ENCODE measurements at regions of chr10 and their contacts with region 1.

Region 1: GRCh38 chr10:51186361-51186760 is 112.1 kb downstream of the PRKG1 start:
- DNase-seq: no peak
- H3K4me3 ChIP-seq: no peak overlapping the region
- H3K27me3 ChIP-seq: no peaks in the 10 kb centered on the region
- CTCF ChIP-seq: no peak

Region 2: DNA sequence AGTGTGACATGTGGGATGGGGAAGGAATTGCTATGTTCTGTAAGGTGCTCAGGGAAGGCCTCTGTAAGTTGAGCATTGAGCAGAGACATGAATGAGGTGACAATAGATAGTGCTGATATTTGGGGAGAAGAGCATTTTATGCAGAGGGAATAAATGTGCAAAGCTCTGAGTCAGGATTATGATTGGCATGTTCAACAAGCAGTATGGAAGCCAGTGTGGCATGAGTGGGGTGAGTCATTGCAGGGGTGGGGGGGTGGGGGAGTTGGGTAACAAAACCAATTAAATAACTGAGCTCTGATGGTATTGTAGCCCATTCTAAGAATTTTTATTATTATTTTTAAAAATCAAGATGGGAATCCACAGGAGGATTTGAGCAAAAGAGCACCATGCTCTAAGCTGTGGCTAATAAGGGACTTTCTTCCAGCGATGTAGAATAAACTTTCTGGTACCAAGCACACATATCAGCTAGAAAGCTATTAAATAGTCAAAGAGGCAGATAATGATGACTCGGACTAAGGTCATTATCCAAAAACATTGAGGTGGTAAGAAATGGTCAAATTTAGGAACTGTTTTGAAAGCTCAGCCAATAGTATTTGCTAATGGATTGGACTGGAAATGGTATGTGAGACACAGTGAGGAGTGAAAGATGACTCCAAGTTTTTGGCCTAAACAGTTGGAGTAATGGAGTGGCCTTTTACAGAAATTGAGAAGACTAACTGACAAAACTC is 15.7 kb before region 1 on chr10:
- CTCF ChIA-PET with region 1: no interaction called
- POLR2A ChIA-PET with region 1: no interaction called
- DNase-seq: no peak
- H3K4me3 ChIP-seq: no peak overlapping the region
- H3K27me3 ChIP-seq: no peaks in the 10 kb centered on the region
- CTCF ChIP-seq: no peak

Region 3: DNA sequence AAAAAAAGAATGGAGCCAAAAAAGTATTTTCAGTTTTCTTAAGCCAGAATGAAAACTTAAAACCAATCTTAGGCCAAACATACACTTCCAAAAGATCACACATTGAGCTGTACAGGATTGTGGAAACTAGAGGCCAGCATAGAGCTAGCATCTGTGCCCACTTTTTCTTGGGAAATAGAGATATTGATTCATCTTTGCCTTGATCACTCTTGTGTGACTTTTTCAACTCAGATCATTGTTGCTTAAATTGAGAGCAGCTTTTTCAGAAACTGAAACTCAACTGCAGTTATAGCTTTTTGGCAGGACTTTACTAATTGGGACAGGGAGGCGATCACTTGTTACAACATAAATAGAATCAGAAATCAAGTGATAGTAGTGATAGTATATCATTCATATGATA is 20.1 kb after region 1 on chr10:
- CTCF ChIA-PET with region 1: no interaction called
- POLR2A ChIA-PET with region 1: interaction called, 11 read pairs
- DNase-seq: no peak
- H3K4me3 ChIP-seq: no peak overlapping the region
- H3K27me3 ChIP-seq: no peaks in the 10 kb centered on the region
- CTCF ChIP-seq: no peak

Measured in BJ (cell line).